ENCODE measurements at regions of chr3 and their contacts with region 1.

Region 1: DNA sequence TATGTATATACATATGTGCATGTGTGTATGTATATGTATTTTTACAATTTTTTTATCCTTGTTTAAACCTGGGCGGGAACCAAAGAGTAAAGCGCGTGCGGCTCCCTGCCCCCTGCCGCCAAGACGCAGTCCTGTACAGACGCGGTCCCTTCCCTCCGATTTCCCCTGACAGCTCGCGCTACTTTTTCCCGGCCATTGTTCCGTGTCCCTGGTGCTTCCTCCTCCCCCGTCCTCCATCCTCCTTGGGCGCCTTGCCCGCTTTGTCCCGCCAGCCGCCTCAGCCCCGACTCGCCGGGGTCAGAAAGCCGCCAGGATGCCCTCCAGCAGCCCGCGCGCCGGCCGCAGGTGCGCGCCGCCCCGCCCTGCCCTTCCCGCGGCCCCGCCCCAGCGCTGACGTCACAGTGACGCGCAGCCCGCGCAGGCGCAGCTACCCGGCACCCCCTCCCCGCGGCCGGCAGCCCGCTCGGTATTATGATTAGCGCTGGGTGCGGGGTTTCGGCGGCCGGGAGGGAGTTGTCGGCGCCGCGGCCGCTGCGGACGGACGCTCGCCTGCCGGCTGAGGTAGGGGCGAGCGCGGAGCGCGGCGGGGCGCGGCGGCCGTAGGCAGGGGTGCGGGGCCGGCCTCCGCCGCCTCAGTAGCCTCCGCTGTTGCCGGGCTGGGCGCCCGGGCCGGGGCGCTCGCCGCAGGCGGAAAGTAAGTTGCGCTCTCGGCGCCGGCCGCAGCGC is at the start of gene SNRK:
- DNase-seq: peak; percentile 99
- H3K4me3 ChIP-seq: peak within 1 kb of the TSS; percentile 76 to 78
- H3K27ac ChIP-seq: peak within 1 kb of the TSS; percentile 42 to 80
- H3K4me1 ChIP-seq: peaks cover 13 to 15% of the 10 kb centered on the region in 2 experiments; a peak in 3 of 4 replicates
- H3K27me3 ChIP-seq: peaks cover 7% of the 10 kb centered on the region; the same call in 1 of the 2 replicates
- CTCF ChIP-seq: peak; percentile 33; the same call in 1 of the 2 replicates
- EP300 ChIP-seq: 0 out of 4 replicates have a peak, but pooled peaks of 1 of the 2 experiments have one; percentile 24
- RAD21 ChIP-seq: peak; percentile 26; the same call in 1 of the 2 replicates
- polyA plus RNA-seq, gene SNRK: 3.6 and 4.6 TPM in 2 replicates

Region 2: GRCh38 chr3:43203022-43203421 is 83.3 kb before region 1 on chr3:
- CTCF ChIA-PET with region 1: interaction called, 12 read pairs
- POLR2A ChIA-PET with region 1: no interaction called
- DNase-seq: peak; percentile 82
- H3K4me3 ChIP-seq: no peak overlapping the region
- H3K27ac ChIP-seq: peak overlapping the region in 1 of 2 experiments; percentile 93; a peak in 2 of 4 replicates
- H3K4me1 ChIP-seq: peaks cover 0 to 21% of the 10 kb centered on the region in 2 experiments; a peak in 2 of 4 replicates
- H3K27me3 ChIP-seq: no peaks in the 10 kb centered on the region
- CTCF ChIP-seq: no peak
- EP300 ChIP-seq: peak in 1 of 2 experiments; percentile 97; a peak in 2 of 4 replicates
- RAD21 ChIP-seq: peak; percentile 41

Measured in SK-N-SH (cell line).